ENCODE measurements at regions of chr7 and their contacts with region 1.

Region 1: DNA sequence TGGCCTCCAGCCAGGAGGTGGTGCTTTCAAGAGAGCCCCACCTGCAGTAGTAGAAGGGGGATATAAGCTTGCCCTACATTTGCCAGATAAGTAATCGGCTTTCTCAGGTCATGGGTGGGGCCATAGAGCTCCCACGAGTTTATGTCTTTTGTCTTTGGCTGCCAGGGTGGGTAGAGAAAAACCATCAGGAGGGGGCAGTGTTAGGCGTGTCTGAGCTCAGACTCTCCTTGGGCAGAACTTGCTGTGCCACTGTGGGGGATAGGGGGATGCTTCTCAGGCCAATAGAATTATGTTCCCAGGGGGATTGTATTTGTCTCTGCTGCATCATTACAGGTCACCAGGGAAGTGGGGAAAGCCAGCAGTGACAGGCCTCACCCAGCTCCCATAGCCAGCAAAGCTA is 12.3 kb upstream of the MRPS33 start:
- DNase-seq: peak; percentile 32
- ATAC-seq: peak; percentile 88
- H3K4me3 Mint-ChIP-seq: no peak overlapping the region
- H3K27ac Mint-ChIP-seq: no peak overlapping the region
- H3K4me1 Mint-ChIP-seq: peaks cover 7% of the 10 kb centered on the region
- H3K27me3 Mint-ChIP-seq: peaks cover 17% of the 10 kb centered on the region
- CTCF ChIP-seq: no peak

Region 2: GRCh38 chr7:140902303-140902953 is 124.6 kb before region 1 on chr7:
- CTCF ChIA-PET with region 1: no interaction called
- POLR2A ChIA-PET with region 1: no interaction called
- DNase-seq: no peak
- ATAC-seq: no peak
- H3K4me3 Mint-ChIP-seq: no peak overlapping the region
- H3K27ac Mint-ChIP-seq: no peak overlapping the region; the same call in 1 of the 2 replicates
- H3K4me1 Mint-ChIP-seq: peaks cover 24% of the 10 kb centered on the region
- H3K27me3 Mint-ChIP-seq: no peaks in the 10 kb centered on the region
- CTCF ChIP-seq: no peak

Region 3: DNA sequence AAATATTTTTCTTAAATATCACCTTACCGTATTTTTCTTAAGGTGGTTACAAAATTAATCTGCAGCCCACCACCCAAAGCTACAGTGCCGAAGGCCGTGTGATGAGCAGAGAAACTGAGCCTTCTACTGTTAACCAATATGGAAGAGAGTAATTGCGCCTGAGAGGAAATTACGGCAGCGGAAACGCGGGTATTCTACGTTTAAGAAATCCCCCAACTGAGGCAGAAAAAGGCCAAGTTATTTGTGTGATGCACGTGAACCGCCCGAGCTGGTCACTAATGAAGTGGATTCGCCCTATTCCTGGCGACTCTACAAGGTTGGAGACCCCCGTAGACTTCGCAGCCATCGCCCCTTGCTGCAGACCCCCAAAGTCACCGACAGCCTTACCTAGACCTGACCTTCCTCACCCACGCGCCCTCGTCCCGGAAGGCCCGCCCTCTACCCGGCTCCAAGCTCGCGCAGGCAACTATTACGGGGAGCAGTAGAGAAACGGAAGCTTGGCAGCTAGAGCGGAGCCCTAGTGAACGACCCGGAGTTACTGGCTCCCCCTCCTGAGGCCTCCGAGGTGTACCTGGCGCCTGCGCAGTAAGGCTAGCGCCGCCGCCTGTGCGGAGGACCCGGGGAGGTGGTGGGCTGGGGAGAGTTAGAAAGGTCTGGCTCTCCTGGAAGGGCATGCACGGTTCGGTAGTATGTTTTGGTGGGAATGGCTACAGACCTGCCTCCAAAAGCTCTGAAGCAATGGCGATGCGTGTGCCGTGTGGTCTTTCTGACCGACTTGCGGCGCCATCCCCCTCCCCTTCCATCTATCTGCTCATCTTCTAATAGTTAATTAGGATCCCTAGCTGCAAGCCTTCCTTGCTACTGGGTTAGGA is 12.3 kb before region 1 on chr7 and contains the start of gene MRPS33:
- CTCF ChIA-PET with region 1: interaction called, 15 read pairs
- POLR2A ChIA-PET with region 1: no interaction called
- DNase-seq: peak; percentile 96
- ATAC-seq: peak; percentile 99
- H3K4me3 Mint-ChIP-seq: peak within 1 kb of the TSS; percentile 96
- H3K27ac Mint-ChIP-seq: peak within 1 kb of the TSS; percentile 97
- H3K4me1 Mint-ChIP-seq: peaks cover 23% of the 10 kb centered on the region
- H3K27me3 Mint-ChIP-seq: peaks cover 7% of the 10 kb centered on the region
- CTCF ChIP-seq: no peak
- total RNA-seq, gene MRPS33: 63.5 to 66.8 TPM (median 66.7 TPM) in 3 replicates

Region 4: GRCh38 chr7:141072548-141073172 is 45.6 kb after region 1 on chr7:
- CTCF ChIA-PET with region 1: interaction called, 12 read pairs
- POLR2A ChIA-PET with region 1: no interaction called
- DNase-seq: peak; percentile 55
- ATAC-seq: peak; percentile 10
- H3K4me3 Mint-ChIP-seq: peak overlapping the region; percentile 88
- H3K27ac Mint-ChIP-seq: no peak overlapping the region
- H3K4me1 Mint-ChIP-seq: peaks cover 24% of the 10 kb centered on the region
- H3K27me3 Mint-ChIP-seq: peaks cover 32% of the 10 kb centered on the region
- CTCF ChIP-seq: no peak

Region 5: DNA sequence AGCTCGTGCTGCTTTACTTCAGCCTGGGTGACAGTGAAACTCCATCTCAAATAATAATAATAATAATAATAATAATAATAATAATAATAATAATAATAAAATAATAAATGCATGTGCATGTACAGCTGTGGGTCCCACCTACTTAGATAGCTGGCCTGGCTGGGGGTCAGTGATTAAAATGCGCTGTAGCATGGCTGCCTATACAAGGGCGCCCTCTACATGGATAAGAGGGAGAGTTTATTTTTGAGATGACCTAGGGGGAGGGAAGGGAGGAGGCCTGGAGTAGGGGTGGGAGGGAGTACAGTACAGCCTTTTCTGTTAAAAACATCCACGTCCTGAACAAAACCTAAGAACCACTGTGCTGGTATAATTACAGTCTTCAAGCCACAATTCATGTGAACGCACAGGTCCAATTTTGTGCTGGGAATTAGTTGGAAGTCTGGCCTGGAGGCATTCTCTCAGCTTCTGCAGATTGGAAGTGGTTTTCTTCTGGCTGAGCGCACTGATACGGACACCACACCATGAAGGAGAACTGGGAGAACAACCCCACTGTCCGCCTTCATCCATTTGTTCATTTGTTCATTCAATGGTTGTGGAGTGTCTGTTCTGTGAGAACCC is 193.3 kb after region 1 on chr7:
- CTCF ChIA-PET with region 1: interaction called, 13 read pairs
- POLR2A ChIA-PET with region 1: no interaction called
- DNase-seq: no peak
- ATAC-seq: peak; percentile 84
- H3K4me3 Mint-ChIP-seq: no peak overlapping the region
- H3K27ac Mint-ChIP-seq: no peak overlapping the region
- H3K4me1 Mint-ChIP-seq: peaks cover 40% of the 10 kb centered on the region
- H3K27me3 Mint-ChIP-seq: no peaks in the 10 kb centered on the region
- CTCF ChIP-seq: no peak

Region 6: DNA sequence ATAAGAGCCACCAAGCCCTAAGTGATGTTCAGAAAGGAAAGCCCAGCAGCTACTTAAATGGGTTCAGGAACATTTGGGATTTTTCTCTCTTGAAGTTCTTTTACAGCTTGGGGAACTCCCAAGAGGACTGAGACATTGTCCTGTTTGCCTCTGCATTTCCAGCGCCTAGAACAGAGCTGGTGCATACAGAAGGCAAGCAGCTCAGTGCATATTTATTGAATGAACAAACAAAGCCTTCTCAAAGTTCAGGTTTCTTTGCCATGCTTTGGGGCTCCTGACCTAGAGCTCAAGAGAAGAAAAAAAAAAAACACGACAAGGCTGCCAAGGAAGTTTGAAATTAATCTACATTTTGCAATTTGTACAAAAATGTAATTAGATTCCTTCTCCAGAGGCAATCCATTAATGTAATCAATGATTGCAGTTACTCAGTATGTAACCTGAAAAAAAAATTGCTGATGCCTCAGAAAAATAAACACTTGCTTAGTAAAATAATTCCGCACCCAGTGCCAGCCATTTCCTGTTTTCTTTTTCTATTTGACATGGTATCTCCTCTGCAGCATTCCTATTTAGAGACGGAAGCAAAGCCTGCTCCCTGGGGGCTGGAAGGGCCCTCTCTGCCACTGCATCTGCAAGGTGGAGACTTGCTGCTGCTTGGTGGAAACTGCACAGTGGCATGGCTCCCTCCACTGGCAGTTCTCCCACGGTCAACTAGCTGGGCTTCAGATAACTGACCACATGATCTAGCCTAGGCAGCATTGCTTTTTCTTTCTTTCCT is 204.2 kb after region 1 on chr7:
- CTCF ChIA-PET with region 1: interaction called, 11 read pairs
- POLR2A ChIA-PET with region 1: no interaction called
- DNase-seq: peak; percentile 58
- ATAC-seq: peak; percentile 88
- H3K4me3 Mint-ChIP-seq: no peak overlapping the region
- H3K27ac Mint-ChIP-seq: no peak overlapping the region
- H3K4me1 Mint-ChIP-seq: peaks cover 52% of the 10 kb centered on the region
- H3K27me3 Mint-ChIP-seq: no peaks in the 10 kb centered on the region
- CTCF ChIP-seq: no peak